MCF 10A (cell line): ENCODE measurements at regions of chr6 and their contacts with region 1.

Region 1: DNA sequence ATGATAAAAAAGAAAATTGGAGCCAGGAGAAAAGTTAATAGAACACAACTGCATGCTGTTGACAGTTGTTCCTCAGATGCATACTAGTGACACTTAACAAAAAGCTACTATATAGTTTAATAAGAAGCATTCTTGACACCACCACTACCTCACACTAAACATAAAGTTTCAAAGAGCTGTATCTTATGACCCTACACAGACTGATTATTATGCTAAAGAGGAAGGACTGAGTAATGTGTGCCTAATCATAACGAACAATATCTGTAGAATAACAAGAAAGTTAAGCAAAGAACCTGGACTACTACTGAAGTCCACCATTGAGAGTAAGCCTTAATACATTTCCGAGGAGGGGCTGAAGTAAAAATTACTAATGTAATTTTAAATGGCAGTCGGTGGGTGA is 99.8 kb downstream of the IRAK1BP1 start:
- DNase-seq: no peak
- H3K4me3 Mint-ChIP-seq: no peak overlapping the region
- H3K27ac Mint-ChIP-seq: no peak overlapping the region
- H3K4me1 Mint-ChIP-seq: no peaks in the 10 kb centered on the region
- H3K27me3 Mint-ChIP-seq: no peaks in the 10 kb centered on the region
- CTCF ChIP-seq: no peak

Region 2: GRCh38 chr6:78810146-78810545 is 157.0 kb before region 1 on chr6:
- CTCF ChIA-PET with region 1: no interaction called
- POLR2A ChIA-PET with region 1: no interaction called
- intact Hi-C with region 1: no loop called
- DNase-seq: peak; percentile 81
- H3K4me3 Mint-ChIP-seq: no peak overlapping the region
- H3K27ac Mint-ChIP-seq: peak overlapping the region; percentile 85
- H3K4me1 Mint-ChIP-seq: peaks cover 29% of the 10 kb centered on the region
- H3K27me3 Mint-ChIP-seq: no peaks in the 10 kb centered on the region
- CTCF ChIP-seq: peak; percentile 50

Region 3: DNA sequence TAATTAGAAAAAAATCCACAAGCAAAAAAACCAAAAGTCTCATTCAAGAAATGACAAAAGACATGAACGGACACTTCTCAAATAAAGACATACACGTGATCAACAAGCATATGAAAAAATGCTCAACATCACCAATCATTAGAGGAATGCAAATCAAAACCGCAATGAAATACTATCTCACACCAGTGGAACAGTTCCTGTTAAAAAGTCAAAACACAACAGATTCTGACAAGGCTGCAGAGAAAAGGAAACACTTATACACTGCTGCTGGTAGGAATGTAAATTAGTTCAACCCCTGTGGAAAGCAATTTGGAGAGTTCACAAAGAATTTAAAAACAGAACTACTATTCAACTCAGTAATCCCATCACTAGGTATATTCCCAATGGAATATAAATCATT is 41.9 kb before region 1 on chr6:
- CTCF ChIA-PET with region 1: no interaction called
- POLR2A ChIA-PET with region 1: no interaction called
- intact Hi-C with region 1: loop called (anchors 1 kb)
- DNase-seq: no peak
- H3K4me3 Mint-ChIP-seq: no peak overlapping the region
- H3K27ac Mint-ChIP-seq: no peak overlapping the region
- H3K4me1 Mint-ChIP-seq: no peaks in the 10 kb centered on the region
- H3K27me3 Mint-ChIP-seq: no peaks in the 10 kb centered on the region
- CTCF ChIP-seq: no peak